Stomach (tissue), 19 donors: ENCODE measurements at regions of chr5 and their contacts with region 1.

Region 1: GRCh38 chr5:146291421-146292074 is 47.1 kb upstream of the POU4F3 start:
- DNase-seq: peak in 1 of 2 donors; percentile 70
- H3K4me3 ChIP-seq: no peak overlapping the region
- H3K27ac ChIP-seq: no peak overlapping the region
- H3K4me1 ChIP-seq: no peaks in the 10 kb centered on the region
- H3K27me3 ChIP-seq: no peaks in the 10 kb centered on the region
- CTCF ChIP-seq: peak in 2 of 7 experiments; percentile 24 to 34
- EP300 ChIP-seq: no peak
- POLR2A ChIP-seq: no peak

Region 2: DNA sequence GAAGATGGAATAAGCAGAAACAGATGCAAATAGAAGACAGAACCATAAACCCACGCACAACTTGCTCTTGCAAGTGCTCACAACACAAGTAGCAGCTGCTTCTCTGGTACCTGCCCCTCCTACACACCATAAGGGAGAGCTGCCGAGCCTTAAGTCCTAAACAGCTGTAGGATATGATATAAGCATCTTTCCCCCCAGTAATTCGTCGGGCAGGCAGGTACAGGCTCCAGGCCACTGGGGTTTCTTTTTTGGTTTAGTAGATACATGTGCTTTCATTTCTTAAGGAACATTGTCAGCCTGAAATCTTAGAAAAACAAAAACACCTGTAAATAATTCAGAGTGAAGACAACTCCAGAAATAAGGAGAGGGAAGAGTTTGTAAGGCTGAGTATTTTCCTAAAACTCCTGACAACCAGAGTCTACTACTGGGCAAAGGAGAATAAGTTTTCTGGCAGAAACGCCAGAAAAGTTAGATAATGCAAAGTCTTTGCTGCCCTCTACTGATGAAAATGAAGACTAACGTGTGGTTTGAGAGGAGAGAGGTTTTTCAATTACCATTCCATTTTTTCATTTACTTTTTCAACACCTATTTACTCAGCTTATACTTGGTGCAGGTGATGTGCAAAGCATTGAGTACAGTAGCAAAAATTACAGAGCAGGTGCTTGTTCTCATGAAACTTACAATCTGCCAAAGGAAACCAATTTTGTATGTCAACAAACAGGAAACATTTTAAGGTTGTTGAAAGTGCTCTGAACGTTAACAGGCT is 135.5 kb after region 1 on chr5:
- intact Hi-C with region 1: loop called (anchors 10 kb)
- DNase-seq: peak in 1 of 2 donors; percentile 66
- H3K4me3 ChIP-seq: no peak overlapping the region
- H3K27ac ChIP-seq: no peak overlapping the region
- H3K4me1 ChIP-seq: peaks cover 0 to 9% (median 3%) of the 10 kb centered on the region in 4 donors
- H3K27me3 ChIP-seq: peaks cover 0 to 12% (median 0%) of the 10 kb centered on the region in 3 donors
- CTCF ChIP-seq: peak in 5 of 7 experiments; percentile 26 to 62 (median 51)
- EP300 ChIP-seq: no peak
- POLR2A ChIP-seq: no peak